Activated naive CD4-positive, alpha-beta T cell treated with anti-CD3 and anti-CD28 coated beads for 36 hours (primary cell): ENCODE measurements at regions of chr12 and their contacts with region 1.

Region 1: DNA sequence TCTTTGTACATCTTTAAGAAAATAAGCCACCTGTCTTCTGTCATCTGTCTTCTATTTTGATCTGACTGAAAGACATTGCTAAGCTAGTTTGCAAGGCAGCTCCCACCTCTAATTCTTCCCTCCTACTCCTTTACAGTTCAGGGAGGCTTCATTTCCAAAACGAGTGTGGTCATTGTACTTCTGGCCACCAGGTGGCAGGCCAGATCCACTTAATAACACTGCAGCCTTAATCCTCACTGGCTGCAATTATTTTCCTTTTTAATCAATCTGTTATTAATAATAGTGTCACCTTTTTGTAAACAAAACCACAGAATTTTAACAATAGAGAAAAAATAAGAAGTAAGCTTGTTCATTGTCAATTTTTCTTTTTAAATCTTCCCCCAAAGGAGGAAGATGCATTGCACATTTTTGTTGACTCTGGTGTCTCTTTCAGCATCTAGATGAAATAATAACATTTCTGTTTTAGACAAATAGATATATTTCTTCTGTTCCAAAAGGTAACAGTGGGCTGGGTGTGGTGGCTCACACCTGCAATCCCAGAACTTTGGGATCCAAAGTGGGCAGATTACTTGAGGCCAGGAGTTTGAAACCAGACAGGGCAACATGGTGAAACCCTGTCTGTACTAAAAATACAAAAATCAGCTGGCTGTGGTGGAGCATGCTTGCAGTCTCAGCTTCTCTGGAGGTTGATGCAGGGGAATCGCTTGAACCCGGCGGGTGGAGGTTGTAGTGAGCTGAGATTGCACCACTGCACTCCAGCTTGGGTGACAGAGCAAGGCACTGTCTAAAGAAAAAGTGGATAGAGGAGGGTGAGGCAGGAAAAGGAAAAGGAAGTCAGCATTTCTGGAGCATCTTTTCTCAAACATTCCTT is 23.3 kb downstream of the GABARAPL1 start:
- DNase-seq: peak; percentile 43
- H3K4me3 Mint-ChIP-seq: no peak overlapping the region
- H3K27ac Mint-ChIP-seq: no peak overlapping the region
- H3K4me1 Mint-ChIP-seq: no peaks in the 10 kb centered on the region
- H3K27me3 Mint-ChIP-seq: no peaks in the 10 kb centered on the region

Region 2: GRCh38 chr12:10130042-10130441 is 106.0 kb before region 1 on chr12 and contains the start of gene CLEC7A:
- CTCF ChIA-PET with region 1: no interaction called
- intact Hi-C with region 1: no loop called
- DNase-seq: no peak
- H3K4me3 Mint-ChIP-seq: no peak within 1 kb of the TSS
- H3K27ac Mint-ChIP-seq: no peak within 1 kb of the TSS
- H3K4me1 Mint-ChIP-seq: peaks cover 16% of the 10 kb centered on the region
- H3K27me3 Mint-ChIP-seq: peaks cover 8% of the 10 kb centered on the region
- total RNA-seq, gene CLEC7A: not detected

Region 3: GRCh38 chr12:10320643-10321042 is 84.6 kb after region 1 on chr12:
- CTCF ChIA-PET with region 1: interaction called, 5 read pairs
- intact Hi-C with region 1: loop called (anchors 5 kb)
- DNase-seq: no peak
- H3K4me3 Mint-ChIP-seq: no peak overlapping the region
- H3K27ac Mint-ChIP-seq: peak overlapping the region; percentile 2
- H3K4me1 Mint-ChIP-seq: peaks cover 28% of the 10 kb centered on the region
- H3K27me3 Mint-ChIP-seq: no peaks in the 10 kb centered on the region

Region 4: DNA sequence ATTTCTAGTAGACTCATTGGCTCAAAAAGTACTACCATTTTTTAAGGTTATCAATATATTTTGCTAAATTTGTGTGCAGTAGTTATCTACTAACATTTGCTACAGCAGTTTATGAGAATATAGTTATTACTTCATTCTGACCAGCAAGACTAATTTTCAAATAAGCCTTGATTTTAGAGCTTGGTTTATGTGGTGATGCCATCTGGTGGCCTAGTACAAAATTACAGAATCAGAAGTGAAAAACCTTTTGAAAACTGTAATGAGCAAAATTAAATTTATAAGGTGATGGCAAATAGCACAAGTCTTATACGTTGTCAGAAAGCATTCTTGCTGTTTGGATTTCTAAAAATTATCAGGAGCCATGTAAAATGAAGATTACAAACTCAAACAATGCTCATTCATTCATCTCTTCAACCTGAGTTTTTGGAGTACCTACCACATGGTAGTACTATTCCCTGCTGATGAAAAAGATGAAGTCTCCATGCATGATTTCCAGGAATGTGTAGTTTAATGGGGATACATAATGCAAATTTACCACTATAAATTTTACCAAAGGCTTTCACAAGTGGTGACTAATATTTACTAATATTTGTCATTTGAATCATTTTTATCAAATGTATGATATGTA is 326.4 kb after region 1 on chr12:
- CTCF ChIA-PET with region 1: interaction called, 41 read pairs
- intact Hi-C with region 1: loop called (anchors 1 kb)
- DNase-seq: peak; percentile 36
- H3K4me3 Mint-ChIP-seq: no peak overlapping the region
- H3K27ac Mint-ChIP-seq: no peak overlapping the region
- H3K4me1 Mint-ChIP-seq: peaks cover 5% of the 10 kb centered on the region
- H3K27me3 Mint-ChIP-seq: peaks cover 15% of the 10 kb centered on the region

Region 5: GRCh38 chr12:10613349-10614055 is 377.5 kb after region 1 on chr12 and contains the start of gene MAGOHB:
- CTCF ChIA-PET with region 1: no interaction called
- intact Hi-C with region 1: loop called (anchors 5 kb)
- DNase-seq: peak; percentile 99
- H3K4me3 Mint-ChIP-seq: peak within 1 kb of the TSS; percentile 99
- H3K27ac Mint-ChIP-seq: peak within 1 kb of the TSS; percentile 99
- H3K4me1 Mint-ChIP-seq: peaks cover 30% of the 10 kb centered on the region
- H3K27me3 Mint-ChIP-seq: peaks cover 2% of the 10 kb centered on the region
- total RNA-seq, gene MAGOHB: 58.8 to 61.1 TPM

Region 6: DNA sequence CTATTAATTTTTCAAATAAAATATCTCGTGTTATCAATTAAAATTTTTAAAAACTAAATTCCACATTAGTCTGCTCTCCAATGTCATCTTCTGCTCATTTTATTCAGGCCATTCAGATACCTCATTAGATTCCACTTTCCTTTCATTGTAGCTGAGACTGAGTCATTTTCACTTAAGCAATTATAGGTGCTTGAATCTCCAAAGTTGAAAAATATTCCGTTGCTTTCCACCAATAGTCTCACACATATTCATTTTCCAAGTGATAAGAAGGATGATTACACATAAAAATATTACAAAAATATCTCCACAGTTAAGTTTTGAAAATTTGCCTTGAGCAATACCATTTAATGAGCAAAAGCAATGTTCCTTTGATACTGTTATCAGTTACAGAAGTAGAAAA is 523.7 kb after region 1 on chr12:
- CTCF ChIA-PET with region 1: no interaction called
- intact Hi-C with region 1: no loop called
- DNase-seq: no peak
- H3K4me3 Mint-ChIP-seq: no peak overlapping the region
- H3K27ac Mint-ChIP-seq: no peak overlapping the region
- H3K4me1 Mint-ChIP-seq: no peaks in the 10 kb centered on the region
- H3K27me3 Mint-ChIP-seq: peaks cover 44% of the 10 kb centered on the region